Endothelial cell of umbilical vein (primary cell): ENCODE measurements at regions of chr12 and their contacts with region 1.

Region 1: DNA sequence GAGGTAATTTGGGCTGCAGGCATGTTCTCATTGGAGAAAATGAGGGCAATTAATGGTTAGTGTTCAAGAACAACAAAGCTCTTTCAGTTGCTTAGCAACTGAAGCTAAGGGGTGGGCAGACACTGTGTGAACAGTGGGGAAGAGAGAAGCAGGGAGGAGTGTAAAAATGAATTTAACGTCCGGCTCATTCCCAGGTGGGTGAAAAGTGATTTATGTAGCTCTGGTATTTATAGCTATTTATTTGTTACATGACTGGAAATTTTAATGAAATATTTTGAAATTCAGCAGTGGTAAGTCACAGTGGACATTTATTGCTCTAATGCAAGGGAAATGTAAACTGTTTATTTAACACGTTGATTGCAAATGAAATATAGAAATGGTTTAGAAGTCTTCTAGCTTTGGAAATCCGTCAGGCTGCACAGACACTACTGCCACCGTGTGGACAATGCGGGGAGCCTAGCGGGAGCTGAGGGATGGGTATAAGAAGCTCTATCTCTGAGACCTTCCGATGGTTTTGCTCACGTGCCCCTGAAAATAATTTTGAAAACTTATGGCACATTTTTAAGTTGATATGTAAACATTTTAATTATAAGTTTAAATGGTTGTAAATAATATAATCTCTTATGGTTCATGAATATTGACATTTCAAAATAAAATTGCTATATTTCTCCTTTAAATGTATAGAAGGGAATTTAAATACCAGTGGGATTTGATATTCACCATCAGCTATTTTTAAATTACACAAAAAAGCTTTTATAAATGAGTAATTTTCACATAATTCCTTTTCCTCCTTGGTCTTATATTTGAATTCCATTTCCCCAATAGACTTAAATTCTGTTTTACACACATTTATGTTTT is 54.4 kb downstream of the E2F7 start:
- DNase-seq: peak; percentile 80
- H3K4me3 ChIP-seq: no peak overlapping the region
- H3K27ac ChIP-seq: no peak overlapping the region
- H3K4me1 ChIP-seq: no peaks in the 10 kb centered on the region
- H3K27me3 ChIP-seq: peaks cover 0 to 7% of the 10 kb centered on the region in 2 experiments
- CTCF ChIP-seq: peak; percentile 89 to 95
- POLR2A ChIP-seq: no peak

Region 2: DNA sequence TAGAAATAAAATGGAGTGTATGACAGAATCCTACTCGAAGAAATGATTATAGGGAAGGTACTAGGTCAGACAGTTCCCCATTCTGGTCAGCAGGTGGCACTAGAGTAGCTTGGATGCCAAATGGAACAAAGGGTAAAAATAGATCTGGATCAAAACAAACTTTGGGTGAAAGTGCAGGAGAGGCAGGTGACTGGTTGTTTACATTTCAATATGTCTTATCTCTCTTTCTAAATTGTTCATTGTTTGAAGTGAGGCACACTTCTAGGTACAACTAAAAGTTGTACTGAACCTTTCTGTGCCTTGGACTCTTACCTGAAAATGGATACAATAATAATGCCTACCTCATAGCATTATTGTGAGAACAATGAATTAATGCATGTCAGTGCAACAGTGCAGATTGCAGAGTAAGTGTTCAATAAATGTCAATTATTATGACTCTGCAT is 389.3 kb before region 1 on chr12:
- CTCF ChIA-PET with region 1: interaction called, 121 read pairs
- POLR2A ChIA-PET with region 1: no interaction called
- dilution Hi-C with region 1: no loop called
- intact Hi-C with region 1: loop called (anchors 1 kb)
- DNase-seq: peak; percentile 75
- H3K4me3 ChIP-seq: no peak overlapping the region
- H3K27ac ChIP-seq: no peak overlapping the region
- H3K4me1 ChIP-seq: peaks cover 2% of the 10 kb centered on the region
- H3K27me3 ChIP-seq: peaks cover 0 to 2% of the 10 kb centered on the region in 2 experiments
- CTCF ChIP-seq: peak; percentile 72 to 77
- POLR2A ChIP-seq: no peak

Region 3: DNA sequence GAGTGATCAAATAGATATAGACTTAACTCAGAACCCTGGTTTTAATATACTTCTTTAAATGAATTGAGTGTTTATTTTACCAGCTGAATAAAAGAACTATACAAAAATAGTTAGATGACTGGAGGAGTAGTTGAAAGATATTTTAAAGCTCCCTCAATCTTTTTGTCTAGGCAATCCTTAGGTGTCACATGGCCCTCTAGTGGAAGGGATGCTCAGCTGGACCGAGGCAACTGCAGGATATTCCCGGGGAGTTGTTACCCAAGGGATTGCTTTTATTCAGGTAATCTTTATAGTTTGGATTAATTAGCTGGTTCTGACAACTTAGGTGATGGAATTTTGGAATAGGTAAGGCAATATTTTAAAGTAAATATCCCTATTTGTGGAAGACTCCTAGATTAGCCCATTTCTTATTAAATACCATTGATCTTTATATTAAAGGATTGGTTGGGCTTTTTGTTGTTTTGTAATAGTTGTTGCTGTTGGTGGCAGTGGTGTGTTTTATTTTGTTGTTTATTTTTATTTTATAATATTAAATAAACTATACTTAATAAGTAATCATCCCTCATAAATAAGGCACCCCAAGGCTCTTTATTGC is 189.9 kb before region 1 on chr12:
- CTCF ChIA-PET with region 1: interaction called, 13 read pairs
- POLR2A ChIA-PET with region 1: no interaction called
- dilution Hi-C with region 1: no loop called
- intact Hi-C with region 1: no loop called
- DNase-seq: peak; percentile 11
- H3K4me3 ChIP-seq: no peak overlapping the region
- H3K27ac ChIP-seq: no peak overlapping the region
- H3K4me1 ChIP-seq: no peaks in the 10 kb centered on the region
- H3K27me3 ChIP-seq: no peaks in the 10 kb centered on the region
- CTCF ChIP-seq: peak; percentile 44 to 51
- POLR2A ChIP-seq: no peak

Region 4: DNA sequence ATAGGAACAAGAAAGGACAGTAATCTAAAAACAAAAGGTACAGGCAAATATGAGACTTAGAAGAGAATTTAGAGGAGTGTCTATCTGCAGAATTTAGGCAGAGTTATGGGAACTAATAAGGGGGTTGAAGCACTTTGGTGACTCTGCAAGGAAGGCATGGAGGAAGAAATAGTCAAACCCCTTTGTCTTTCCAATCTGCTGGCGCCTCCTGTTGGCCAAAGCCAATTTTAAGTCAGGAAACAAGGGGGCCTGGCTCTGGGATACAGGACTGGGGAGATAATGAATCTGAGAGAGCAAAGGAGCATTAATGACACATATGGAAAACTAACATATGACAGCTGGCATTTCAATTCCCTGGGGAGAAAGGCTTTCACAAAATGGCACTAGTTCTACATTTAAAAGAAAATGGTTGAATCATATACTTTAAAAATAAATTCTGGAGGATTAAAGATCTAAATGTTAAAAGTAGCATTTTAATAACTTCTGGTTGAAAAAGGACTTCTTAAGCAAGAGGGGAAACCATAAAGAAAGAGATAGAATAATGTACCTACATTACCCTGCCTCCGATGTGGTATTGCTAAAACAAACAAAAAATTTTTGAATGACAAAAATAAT is 83.6 kb before region 1 on chr12:
- CTCF ChIA-PET with region 1: interaction called, 3 read pairs
- POLR2A ChIA-PET with region 1: no interaction called
- dilution Hi-C with region 1: no loop called
- intact Hi-C with region 1: loop called (anchors 5 kb)
- DNase-seq: peak; percentile 28
- H3K4me3 ChIP-seq: no peak overlapping the region
- H3K27ac ChIP-seq: no peak overlapping the region
- H3K4me1 ChIP-seq: no peaks in the 10 kb centered on the region
- H3K27me3 ChIP-seq: peaks cover 0 to 5% of the 10 kb centered on the region in 2 experiments
- CTCF ChIP-seq: peak; percentile 38 to 52
- POLR2A ChIP-seq: no peak

Region 5: GRCh38 chr12:76984566-76984965 is 26.4 kb before region 1 on chr12:
- CTCF ChIA-PET with region 1: interaction called, 10 read pairs
- POLR2A ChIA-PET with region 1: no interaction called
- dilution Hi-C with region 1: no loop called
- intact Hi-C with region 1: no loop called
- DNase-seq: no peak
- H3K4me3 ChIP-seq: no peak overlapping the region
- H3K27ac ChIP-seq: no peak overlapping the region
- H3K4me1 ChIP-seq: no peaks in the 10 kb centered on the region
- H3K27me3 ChIP-seq: peaks cover 0 to 2% of the 10 kb centered on the region in 2 experiments
- CTCF ChIP-seq: no peak
- POLR2A ChIP-seq: no peak

Region 6: DNA sequence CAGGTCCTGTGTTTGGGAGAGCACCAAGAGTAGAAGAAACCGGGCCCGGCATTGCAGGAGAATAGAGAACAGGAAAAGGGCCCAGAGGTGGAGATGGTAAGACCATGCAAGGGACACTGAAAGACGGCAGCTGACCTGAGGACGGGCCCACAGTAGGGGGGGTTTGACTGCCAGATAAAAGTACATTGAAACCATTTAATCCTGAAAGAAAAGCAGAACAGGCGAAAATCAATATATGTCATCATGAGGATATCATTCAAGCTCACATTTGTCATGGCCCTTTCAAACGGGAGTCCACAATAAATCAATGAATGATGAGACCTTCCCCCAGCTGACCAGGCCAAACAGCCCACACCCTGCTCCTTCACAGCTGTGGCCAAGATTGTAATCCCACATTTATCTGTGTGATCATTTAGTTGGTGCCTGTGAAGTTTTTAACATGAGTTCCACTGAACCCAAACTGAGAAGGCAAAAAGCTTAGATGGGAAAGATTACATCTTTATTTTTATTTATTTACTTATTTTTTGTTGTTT is 14.9 kb after region 1 on chr12:
- CTCF ChIA-PET with region 1: interaction called, 54 read pairs
- POLR2A ChIA-PET with region 1: no interaction called
- dilution Hi-C with region 1: no loop called
- intact Hi-C with region 1: no loop called
- DNase-seq: no peak
- H3K4me3 ChIP-seq: no peak overlapping the region
- H3K27ac ChIP-seq: no peak overlapping the region
- H3K4me1 ChIP-seq: no peaks in the 10 kb centered on the region
- H3K27me3 ChIP-seq: no peaks in the 10 kb centered on the region
- CTCF ChIP-seq: no peak
- POLR2A ChIP-seq: no peak

Region 7: GRCh38 chr12:77082021-77082420 is 71.1 kb after region 1 on chr12:
- CTCF ChIA-PET with region 1: no interaction called
- POLR2A ChIA-PET with region 1: no interaction called
- dilution Hi-C with region 1: no loop called
- intact Hi-C with region 1: no loop called
- DNase-seq: no peak
- H3K4me3 ChIP-seq: no peak overlapping the region
- H3K27ac ChIP-seq: no peak overlapping the region
- H3K4me1 ChIP-seq: no peaks in the 10 kb centered on the region
- H3K27me3 ChIP-seq: no peaks in the 10 kb centered on the region
- CTCF ChIP-seq: no peak
- POLR2A ChIP-seq: no peak